CD8-positive, alpha-beta T cell (primary cell): ENCODE measurements at regions of chr1 and their contacts with region 1.

Region 1: GRCh38 chr1:206725109-206725963 is 40.6 kb downstream of the MAPKAPK2 start:
- DNase-seq: peak in 8 of 9 experiments; percentile 34 to 78 (median 64)
- ATAC-seq: peak; percentile 57
- H3K4me3 ChIP-seq: no peak overlapping the region
- H3K4me3 Mint-ChIP-seq: peak overlapping the region; percentile 5
- H3K27ac ChIP-seq: no peak overlapping the region
- H3K27ac Mint-ChIP-seq: peak overlapping the region; percentile 25
- H3K4me1 ChIP-seq: peaks cover 27% of the 10 kb centered on the region
- H3K4me1 Mint-ChIP-seq: peaks cover 59% of the 10 kb centered on the region
- H3K27me3 ChIP-seq: no peaks in the 10 kb centered on the region
- H3K27me3 Mint-ChIP-seq: no peaks in the 10 kb centered on the region
- CTCF ChIP-seq: peak; percentile 47

Region 2: GRCh38 chr1:206663832-206664652 is 61.3 kb before region 1 on chr1:
- CTCF ChIA-PET with region 1: interaction called, 36 read pairs
- POLR2A ChIA-PET with region 1: no interaction called
- intact Hi-C with region 1: no loop called
- DNase-seq: peak; percentile 46 to 83 (median 76)
- ATAC-seq: peak; percentile 94
- H3K4me3 ChIP-seq: no peak overlapping the region
- H3K4me3 Mint-ChIP-seq: no peak overlapping the region
- H3K27ac ChIP-seq: no peak overlapping the region
- H3K27ac Mint-ChIP-seq: no peak overlapping the region
- H3K4me1 ChIP-seq: peaks cover 5% of the 10 kb centered on the region
- H3K4me1 Mint-ChIP-seq: peaks cover 16% of the 10 kb centered on the region
- H3K27me3 ChIP-seq: peaks cover 0 to 7% of the 10 kb centered on the region in 2 experiments
- H3K27me3 Mint-ChIP-seq: peaks cover 21% of the 10 kb centered on the region
- CTCF ChIP-seq: peak; percentile 89

Region 3: DNA sequence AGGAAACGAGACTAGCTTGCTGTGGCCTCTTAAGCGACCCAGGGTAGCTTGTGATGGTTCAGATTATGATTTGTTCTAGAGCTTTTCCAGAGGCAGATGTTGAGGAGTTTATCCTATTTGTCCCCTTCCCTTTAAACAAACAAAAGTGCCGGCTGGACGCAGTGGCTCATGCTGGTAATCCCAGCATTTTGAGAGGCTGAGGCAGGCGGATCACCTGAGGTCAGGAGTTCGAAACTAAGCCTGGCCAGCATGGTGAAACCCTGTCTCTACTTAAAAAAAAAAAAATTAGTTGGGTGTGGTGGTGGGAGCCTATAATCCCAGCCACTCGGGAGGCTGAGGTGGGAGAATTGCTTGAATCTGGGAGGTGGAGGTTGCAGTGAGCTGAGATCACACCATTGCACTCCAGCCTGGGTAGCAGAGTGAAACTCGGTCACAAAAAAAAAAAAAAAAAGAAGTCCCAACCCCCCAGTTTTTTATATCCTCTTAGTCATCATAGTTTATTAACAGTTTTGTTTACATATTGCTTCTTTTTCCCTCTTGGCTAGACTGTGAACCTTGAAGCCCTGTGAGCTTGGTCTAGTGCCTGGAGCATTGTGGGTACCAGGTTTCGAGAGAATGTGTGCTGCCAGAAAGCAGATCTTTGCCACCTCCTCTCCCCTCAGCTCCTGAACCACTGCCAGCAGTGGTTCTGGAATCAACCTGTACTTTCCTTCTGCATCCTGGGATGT is 10.8 kb before region 1 on chr1:
- CTCF ChIA-PET with region 1: interaction called, 24 read pairs
- POLR2A ChIA-PET with region 1: interaction called, 3 read pairs
- intact Hi-C with region 1: no loop called
- DNase-seq: peak in 3 of 9 experiments; percentile 58 to 82 (median 72)
- ATAC-seq: peak; percentile 62
- H3K4me3 ChIP-seq: no peak overlapping the region
- H3K4me3 Mint-ChIP-seq: peak overlapping the region; percentile 35
- H3K27ac ChIP-seq: peak overlapping the region in 1 of 2 experiments; percentile 69
- H3K27ac Mint-ChIP-seq: peak overlapping the region; percentile 95
- H3K4me1 ChIP-seq: peaks cover 58% of the 10 kb centered on the region
- H3K4me1 Mint-ChIP-seq: peaks cover 84% of the 10 kb centered on the region
- H3K27me3 ChIP-seq: no peaks in the 10 kb centered on the region
- H3K27me3 Mint-ChIP-seq: no peaks in the 10 kb centered on the region
- CTCF ChIP-seq: no peak

Region 4: GRCh38 chr1:206766251-206766856 is 41.0 kb after region 1 on chr1:
- CTCF ChIA-PET with region 1: interaction called, 25 read pairs
- POLR2A ChIA-PET with region 1: no interaction called
- intact Hi-C with region 1: no loop called
- DNase-seq: peak; percentile 47 to 89 (median 77)
- ATAC-seq: peak; percentile 77
- H3K4me3 ChIP-seq: peak overlapping the region; percentile 3 to 9
- H3K4me3 Mint-ChIP-seq: peak overlapping the region; percentile 61
- H3K27ac ChIP-seq: no peak overlapping the region
- H3K27ac Mint-ChIP-seq: peak overlapping the region; percentile 82
- H3K4me1 ChIP-seq: peaks cover 63% of the 10 kb centered on the region
- H3K4me1 Mint-ChIP-seq: peaks cover 61% of the 10 kb centered on the region
- H3K27me3 ChIP-seq: no peaks in the 10 kb centered on the region
- H3K27me3 Mint-ChIP-seq: no peaks in the 10 kb centered on the region
- CTCF ChIP-seq: no peak

Region 5: DNA sequence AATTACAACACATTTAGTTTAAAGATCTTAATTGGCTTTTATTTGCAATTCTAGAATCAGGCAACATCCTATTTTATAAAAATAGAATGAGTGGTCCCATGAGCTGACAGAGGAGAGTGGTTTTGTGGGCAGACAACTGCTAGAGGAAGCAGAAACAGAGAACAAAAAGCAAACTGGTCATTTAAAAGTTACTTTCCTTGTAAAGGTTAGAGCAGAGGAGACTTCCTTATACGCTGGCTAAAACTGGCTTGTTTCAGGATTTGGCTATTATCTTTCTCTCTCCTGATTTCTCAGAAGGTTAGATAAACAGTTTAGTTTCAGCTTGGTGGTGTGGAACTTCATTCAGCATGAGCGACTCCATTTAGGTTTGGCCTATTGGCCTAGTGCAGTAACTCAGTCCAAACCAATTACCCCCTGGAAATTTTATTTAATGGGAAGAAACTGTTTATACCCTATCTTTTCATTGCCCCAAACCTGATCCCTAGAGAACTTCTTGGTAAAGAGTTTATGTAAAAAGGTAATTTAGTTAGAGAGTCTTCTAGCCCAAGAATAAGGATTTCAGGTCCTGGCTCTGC is 107.9 kb after region 1 on chr1:
- CTCF ChIA-PET with region 1: interaction called, 15 read pairs
- POLR2A ChIA-PET with region 1: no interaction called
- intact Hi-C with region 1: no loop called
- DNase-seq: no peak
- ATAC-seq: no peak
- H3K4me3 ChIP-seq: no peak overlapping the region
- H3K4me3 Mint-ChIP-seq: no peak overlapping the region
- H3K27ac ChIP-seq: no peak overlapping the region
- H3K27ac Mint-ChIP-seq: no peak overlapping the region
- H3K4me1 ChIP-seq: peaks cover 25% of the 10 kb centered on the region
- H3K4me1 Mint-ChIP-seq: peaks cover 47% of the 10 kb centered on the region
- H3K27me3 ChIP-seq: no peaks in the 10 kb centered on the region
- H3K27me3 Mint-ChIP-seq: no peaks in the 10 kb centered on the region
- CTCF ChIP-seq: no peak

Region 6: DNA sequence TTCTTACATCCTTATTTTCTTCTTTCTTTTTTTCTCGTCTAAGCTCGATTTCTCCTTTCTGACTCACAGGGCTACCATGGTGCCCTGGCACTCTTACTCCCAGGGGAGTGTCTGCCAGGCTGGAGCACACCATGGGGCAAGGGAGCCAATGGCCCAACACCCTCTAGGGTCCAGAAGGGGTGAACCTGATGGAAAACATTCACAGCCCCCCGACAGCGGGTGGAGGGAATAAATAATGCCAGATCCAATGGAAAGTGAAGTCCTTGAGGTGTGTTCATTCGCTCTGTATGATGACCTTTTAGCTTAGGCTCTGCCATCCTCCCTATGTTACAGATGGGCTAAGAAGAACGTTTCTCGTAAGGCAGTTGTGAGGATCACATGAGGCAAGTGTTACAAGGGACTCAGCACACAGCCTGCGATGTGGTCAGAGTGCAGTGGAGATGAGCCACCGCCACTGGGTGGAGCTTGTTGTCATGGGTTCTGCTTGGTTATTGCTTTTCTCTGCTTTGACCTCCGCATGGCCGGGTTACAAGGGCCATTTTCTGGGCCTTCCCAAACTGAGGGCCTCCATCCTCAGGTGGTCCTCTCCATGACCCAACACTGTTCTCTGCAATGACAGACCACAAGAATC is 199.9 kb after region 1 on chr1:
- CTCF ChIA-PET with region 1: interaction called, 60 read pairs
- POLR2A ChIA-PET with region 1: no interaction called
- intact Hi-C with region 1: no loop called
- DNase-seq: peak; percentile 49 to 90 (median 70)
- ATAC-seq: peak; percentile 40
- H3K4me3 ChIP-seq: no peak overlapping the region
- H3K4me3 Mint-ChIP-seq: no peak overlapping the region
- H3K27ac ChIP-seq: peak overlapping the region; percentile 46 to 95
- H3K27ac Mint-ChIP-seq: no peak overlapping the region
- H3K4me1 ChIP-seq: peaks cover 62% of the 10 kb centered on the region
- H3K4me1 Mint-ChIP-seq: peaks cover 51% of the 10 kb centered on the region
- H3K27me3 ChIP-seq: no peaks in the 10 kb centered on the region
- H3K27me3 Mint-ChIP-seq: no peaks in the 10 kb centered on the region
- CTCF ChIP-seq: no peak

Region 7: DNA sequence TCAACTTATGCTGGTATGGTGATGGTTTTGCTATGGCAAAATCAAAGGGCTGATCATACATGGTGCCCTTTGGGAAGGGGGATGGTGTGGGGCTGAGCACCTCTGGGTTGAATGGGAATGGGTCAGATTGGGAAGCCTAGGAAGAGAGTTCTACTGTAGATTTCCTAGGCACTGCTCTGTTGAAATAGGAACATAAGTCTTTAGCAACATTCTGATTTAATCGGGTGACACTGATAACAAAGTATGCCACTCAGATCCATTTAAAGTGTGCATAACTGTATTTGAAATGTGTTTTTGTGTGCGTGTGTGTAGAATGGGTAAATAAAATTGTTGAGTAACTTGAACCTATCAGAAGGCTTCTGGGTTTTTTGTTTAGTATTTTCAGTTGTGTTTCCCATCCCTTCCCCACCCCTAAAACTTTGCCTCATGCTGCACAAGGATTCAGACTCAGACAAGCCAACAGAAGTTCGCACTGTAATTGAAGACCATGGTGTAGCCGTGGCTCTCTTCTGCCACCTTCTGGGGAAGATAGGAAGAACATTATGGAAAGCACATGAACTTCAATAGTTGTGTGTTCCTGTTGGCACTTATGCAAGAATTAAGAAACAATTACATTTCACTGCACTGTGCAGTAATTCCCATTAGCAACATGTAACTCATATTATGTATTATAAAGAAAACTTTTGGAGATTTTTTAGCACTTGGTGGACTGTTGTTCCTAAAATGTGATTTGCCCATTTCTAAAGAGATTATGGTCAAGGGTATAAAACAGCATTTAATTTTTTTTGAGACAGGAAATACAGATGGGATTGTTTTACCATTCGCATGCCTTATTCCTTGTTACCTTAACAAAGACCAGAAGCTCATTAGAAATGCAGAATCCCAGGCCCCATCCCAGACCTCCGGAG is 352.4 kb after region 1 on chr1:
- CTCF ChIA-PET with region 1: no interaction called
- POLR2A ChIA-PET with region 1: no interaction called
- intact Hi-C with region 1: loop called in 1 of 2 experiments (anchors 5 kb)
- DNase-seq: peak; percentile 34 to 84 (median 59)
- ATAC-seq: peak; percentile 99
- H3K4me3 ChIP-seq: no peak overlapping the region
- H3K4me3 Mint-ChIP-seq: no peak overlapping the region
- H3K27ac ChIP-seq: no peak overlapping the region
- H3K27ac Mint-ChIP-seq: no peak overlapping the region
- H3K4me1 ChIP-seq: no peaks in the 10 kb centered on the region
- H3K4me1 Mint-ChIP-seq: peaks cover 4% of the 10 kb centered on the region
- H3K27me3 ChIP-seq: no peaks in the 10 kb centered on the region
- H3K27me3 Mint-ChIP-seq: peaks cover 6% of the 10 kb centered on the region
- CTCF ChIP-seq: peak; percentile 94